ENCODE measurements at regions of chr3 and their contacts with region 1.

Region 1: GRCh38 chr3:40719660-40720287 is 195.0 kb downstream of the ZNF621 start:
- DNase-seq: no peak
- ATAC-seq: no peak
- H3K4me3 ChIP-seq: no peak overlapping the region
- H3K27ac ChIP-seq: no peak overlapping the region
- H3K4me1 ChIP-seq: peaks cover 0 to 8% (median 0%) of the 10 kb centered on the region in 12 donors
- H3K27me3 ChIP-seq: no peaks in the 10 kb centered on the region
- CTCF ChIP-seq: peak in 11 of 12 donors; percentile 25 to 62 (median 40)
- POLR2A ChIP-seq: no peak

Region 2: DNA sequence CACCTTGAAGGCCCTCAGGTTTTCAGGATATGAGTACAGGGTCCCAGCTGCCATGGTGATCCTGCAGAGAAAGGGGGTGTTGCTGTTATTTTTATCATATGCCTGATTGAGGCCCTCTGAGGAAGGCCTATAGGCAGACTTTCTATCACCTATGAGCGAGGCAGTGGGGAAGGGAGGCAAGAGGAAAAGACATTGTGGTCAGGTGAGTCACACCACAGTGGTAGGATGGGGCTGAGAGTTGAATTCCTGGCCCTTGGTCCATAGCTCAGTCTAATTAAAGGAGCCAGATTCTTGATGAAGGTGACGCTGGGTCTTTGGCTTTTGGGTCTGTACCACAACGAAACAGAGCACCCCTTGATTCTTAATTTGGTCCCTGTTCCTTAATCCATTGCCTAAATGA is 122.3 kb before region 1 on chr3:
- intact Hi-C with region 1: loop called in 1 of 10 experiments (anchors 10 kb)
- DNase-seq: no peak
- ATAC-seq: no peak
- H3K4me3 ChIP-seq: no peak overlapping the region
- H3K27ac ChIP-seq: no peak overlapping the region
- H3K4me1 ChIP-seq: no peaks in the 10 kb centered on the region
- H3K27me3 ChIP-seq: no peaks in the 10 kb centered on the region
- CTCF ChIP-seq: no peak
- POLR2A ChIP-seq: no peak

Region 3: GRCh38 chr3:40908612-40909011 is 188.8 kb after region 1 on chr3:
- intact Hi-C with region 1: no loop called
- DNase-seq: no peak
- ATAC-seq: no peak
- H3K4me3 ChIP-seq: no peak overlapping the region
- H3K27ac ChIP-seq: no peak overlapping the region
- H3K4me1 ChIP-seq: no peaks in the 10 kb centered on the region
- H3K27me3 ChIP-seq: no peaks in the 10 kb centered on the region
- CTCF ChIP-seq: no peak
- POLR2A ChIP-seq: no peak

Region 4: GRCh38 chr3:41716471-41716870 is 996.7 kb after region 1 on chr3:
- intact Hi-C with region 1: loop called in 1 of 10 experiments (anchors 10 kb)
- DNase-seq: no peak
- ATAC-seq: no peak
- H3K4me3 ChIP-seq: no peak overlapping the region
- H3K27ac ChIP-seq: no peak overlapping the region
- H3K4me1 ChIP-seq: peaks cover 0 to 8% (median 0%) of the 10 kb centered on the region in 12 donors
- H3K27me3 ChIP-seq: no peaks in the 10 kb centered on the region
- CTCF ChIP-seq: peak in 10 of 12 donors; percentile 17 to 48 (median 30)
- POLR2A ChIP-seq: no peak

Region 5: DNA sequence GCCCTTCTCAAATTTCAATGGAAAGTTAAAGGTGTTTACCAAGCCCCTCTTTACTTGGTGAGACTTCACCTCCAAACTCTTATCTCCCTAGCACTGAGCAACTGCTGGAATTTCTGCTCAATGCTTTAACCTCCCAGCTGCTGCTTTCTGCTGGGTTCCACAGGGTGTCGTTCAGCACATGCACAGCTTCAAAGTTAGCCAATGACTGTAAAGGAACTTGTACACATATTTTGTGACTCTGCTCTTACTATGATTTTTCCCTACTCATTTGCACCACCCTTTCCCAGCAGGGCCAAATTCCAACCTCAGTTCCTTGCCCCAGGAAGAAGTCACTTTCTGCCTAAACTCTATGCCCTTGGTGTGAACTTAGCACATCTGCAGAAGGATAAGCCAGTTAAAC is 1152.4 kb after region 1 on chr3:
- intact Hi-C with region 1: loop called in 1 of 10 experiments (anchors 10 kb)
- DNase-seq: no peak
- ATAC-seq: no peak
- H3K4me3 ChIP-seq: no peak overlapping the region
- H3K27ac ChIP-seq: no peak overlapping the region
- H3K4me1 ChIP-seq: no peaks in the 10 kb centered on the region
- H3K27me3 ChIP-seq: no peaks in the 10 kb centered on the region
- CTCF ChIP-seq: no peak
- POLR2A ChIP-seq: no peak

Measured in heart left ventricle (tissue), 16 donors.